ENCODE measurements at regions of chr1 and their contacts with region 1.

Region 1: DNA sequence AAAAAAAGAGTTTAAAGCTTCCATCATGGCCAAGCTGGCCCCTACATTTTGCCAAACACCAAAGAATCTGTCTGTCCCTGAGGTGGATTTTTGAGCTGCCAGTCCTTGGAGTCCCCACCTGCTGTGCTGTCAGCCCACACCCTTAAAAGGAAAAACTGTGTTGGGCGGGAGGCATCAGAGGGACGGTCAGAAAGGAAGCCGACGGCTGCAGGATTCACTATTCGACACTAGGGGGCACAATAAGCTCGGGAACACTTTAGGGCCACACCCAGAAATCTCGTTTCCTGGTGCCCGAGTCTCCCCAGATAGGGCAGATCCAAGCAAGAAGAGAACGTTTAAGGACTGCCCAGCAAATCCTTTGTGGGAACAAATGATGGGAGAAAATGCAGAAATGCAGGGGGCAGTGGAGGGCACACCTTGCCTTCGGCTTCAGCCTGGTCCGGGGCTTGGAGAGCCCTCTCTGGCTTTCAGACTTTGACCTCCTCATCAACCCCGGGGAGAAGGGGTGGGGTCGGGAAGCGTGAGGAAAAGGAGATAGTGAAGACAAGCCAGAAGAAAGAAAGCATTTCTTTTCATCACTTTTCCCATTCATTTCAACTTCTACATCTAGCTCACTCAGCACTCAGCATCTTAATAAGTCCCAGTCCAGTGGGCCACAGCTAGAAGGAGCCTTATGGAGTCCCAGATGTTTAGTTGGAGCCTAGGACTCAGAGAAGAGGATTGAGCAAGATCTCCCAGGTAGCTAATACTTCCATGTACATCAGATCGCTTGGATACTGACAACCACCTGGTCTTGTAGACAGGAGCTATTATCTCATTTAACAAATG is 5.0 kb upstream of the CTTNBP2NL start:
- DNase-seq: peak; percentile 86
- H3K4me3 Mint-ChIP-seq: peak overlapping the region; percentile 62
- H3K27ac Mint-ChIP-seq: peak overlapping the region; percentile 6
- H3K4me1 Mint-ChIP-seq: peaks cover 42% of the 10 kb centered on the region
- H3K27me3 Mint-ChIP-seq: peaks cover 7% of the 10 kb centered on the region

Region 2: DNA sequence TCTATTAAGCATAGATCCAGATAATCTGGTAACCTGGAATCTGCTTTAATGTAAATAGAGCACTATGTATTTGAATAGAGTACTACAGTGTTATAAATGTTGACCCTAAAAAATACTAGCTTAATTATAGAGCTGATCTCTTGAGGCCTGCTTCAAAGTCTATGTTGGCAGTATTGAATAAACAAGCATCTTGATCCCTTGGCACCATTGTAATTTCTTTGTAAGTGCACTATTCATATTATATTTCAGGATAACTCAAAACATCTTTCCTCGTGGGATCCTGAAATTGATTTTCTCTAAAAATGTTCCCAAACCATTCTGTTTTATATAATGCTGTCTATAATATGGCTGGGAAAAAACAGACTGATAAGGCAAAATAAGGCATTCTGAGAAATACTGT is 15.8 kb after region 1 on chr1:
- CTCF ChIA-PET with region 1: interaction called, 18 read pairs
- POLR2A ChIA-PET with region 1: no interaction called
- DNase-seq: no peak
- H3K4me3 Mint-ChIP-seq: no peak overlapping the region
- H3K27ac Mint-ChIP-seq: no peak overlapping the region
- H3K4me1 Mint-ChIP-seq: peaks cover 3% of the 10 kb centered on the region
- H3K27me3 Mint-ChIP-seq: peaks cover 2% of the 10 kb centered on the region

Region 3: DNA sequence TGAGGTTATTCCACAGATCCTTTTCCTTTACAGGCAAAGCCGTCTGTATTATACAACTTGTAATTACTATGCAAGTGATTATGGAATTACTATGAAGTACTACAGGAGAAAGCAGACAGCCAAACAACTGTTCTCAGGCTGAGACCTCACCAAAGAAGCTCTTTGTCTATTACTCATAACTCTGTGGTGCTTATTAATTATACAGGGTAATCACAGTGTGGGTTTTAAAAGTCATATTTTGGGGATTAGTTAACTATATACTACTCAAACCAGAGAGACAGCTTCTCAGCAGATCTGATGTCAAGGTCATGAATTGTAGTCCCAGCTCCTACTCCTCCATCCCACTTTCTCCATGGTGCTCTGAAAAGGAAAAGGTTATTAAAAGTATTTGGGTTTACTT is 54.6 kb after region 1 on chr1:
- CTCF ChIA-PET with region 1: interaction called, 10 read pairs
- POLR2A ChIA-PET with region 1: no interaction called
- DNase-seq: no peak
- H3K4me3 Mint-ChIP-seq: no peak overlapping the region
- H3K27ac Mint-ChIP-seq: no peak overlapping the region
- H3K4me1 Mint-ChIP-seq: no peaks in the 10 kb centered on the region
- H3K27me3 Mint-ChIP-seq: no peaks in the 10 kb centered on the region

Region 4: DNA sequence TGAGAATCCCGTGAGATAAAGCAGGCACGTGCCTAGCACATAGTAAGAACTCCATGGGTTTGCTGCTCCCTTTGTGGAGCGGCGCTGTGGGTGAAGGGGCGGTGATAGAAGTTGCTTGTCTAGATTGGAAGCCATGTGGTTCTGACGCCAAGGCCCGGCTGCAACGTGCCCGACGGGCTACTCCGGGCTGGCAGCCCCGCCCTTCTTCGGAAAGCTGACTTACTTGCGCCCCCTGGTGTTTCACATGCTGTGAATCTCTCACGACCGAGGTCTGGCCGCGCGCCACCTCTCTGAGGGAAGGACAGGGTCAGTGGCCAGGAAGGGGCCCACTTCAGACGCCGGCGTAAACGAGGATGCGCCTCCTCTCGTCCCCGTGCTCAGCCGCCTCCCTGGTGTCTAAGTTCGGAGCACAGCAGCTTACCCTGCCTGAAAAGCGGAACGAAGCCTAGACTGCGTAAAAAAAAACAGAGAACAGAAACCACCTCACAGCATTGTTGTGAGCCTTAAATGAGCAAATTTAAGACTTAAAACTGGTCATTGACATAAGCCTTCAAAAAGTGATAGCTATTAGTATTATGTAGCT is 75.2 kb after region 1 on chr1:
- CTCF ChIA-PET with region 1: interaction called, 163 read pairs
- POLR2A ChIA-PET with region 1: interaction called, 5 read pairs
- DNase-seq: peak; percentile 86
- H3K4me3 Mint-ChIP-seq: peak overlapping the region; percentile 73
- H3K27ac Mint-ChIP-seq: no peak overlapping the region
- H3K4me1 Mint-ChIP-seq: peaks cover 17% of the 10 kb centered on the region
- H3K27me3 Mint-ChIP-seq: peaks cover 32% of the 10 kb centered on the region

Region 5: DNA sequence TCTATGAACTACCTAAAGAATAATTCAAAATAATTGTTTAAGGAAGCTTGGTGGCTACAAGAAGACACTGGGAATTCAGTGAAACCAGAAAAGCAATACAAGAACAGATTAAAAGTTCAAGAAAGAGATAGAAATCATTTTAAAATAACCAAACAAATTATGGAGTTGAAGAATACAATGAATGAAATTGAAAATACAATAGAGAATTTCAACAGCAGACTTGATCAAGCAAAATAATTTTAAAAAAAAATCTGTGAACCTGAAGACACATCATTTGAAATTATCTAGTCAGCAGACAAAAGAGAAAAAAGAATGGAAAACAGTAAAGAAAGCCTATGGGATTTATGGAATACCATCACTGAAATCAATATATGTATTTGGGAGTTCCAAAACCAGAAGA is 86.6 kb after region 1 on chr1:
- CTCF ChIA-PET with region 1: no interaction called
- POLR2A ChIA-PET with region 1: no interaction called
- DNase-seq: no peak
- H3K4me3 Mint-ChIP-seq: no peak overlapping the region
- H3K27ac Mint-ChIP-seq: no peak overlapping the region
- H3K4me1 Mint-ChIP-seq: no peaks in the 10 kb centered on the region
- H3K27me3 Mint-ChIP-seq: peaks cover 24% of the 10 kb centered on the region

Region 6: GRCh38 chr1:112614460-112615065 is 223.6 kb after region 1 on chr1:
- CTCF ChIA-PET with region 1: interaction called, 36 read pairs
- POLR2A ChIA-PET with region 1: interaction called, 24 read pairs
- DNase-seq: no peak
- H3K4me3 Mint-ChIP-seq: no peak overlapping the region
- H3K27ac Mint-ChIP-seq: no peak overlapping the region
- H3K4me1 Mint-ChIP-seq: peaks cover 25% of the 10 kb centered on the region
- H3K27me3 Mint-ChIP-seq: no peaks in the 10 kb centered on the region

Region 7: GRCh38 chr1:112706908-112707663 is 316.1 kb after region 1 on chr1 and contains the start of gene RHOC:
- CTCF ChIA-PET with region 1: interaction called, 11 read pairs
- POLR2A ChIA-PET with region 1: no interaction called
- DNase-seq: peak; percentile 69
- H3K4me3 Mint-ChIP-seq: peak within 1 kb of the TSS; percentile 73
- H3K27ac Mint-ChIP-seq: peak within 1 kb of the TSS; percentile 89
- H3K4me1 Mint-ChIP-seq: peaks cover 49% of the 10 kb centered on the region
- H3K27me3 Mint-ChIP-seq: peaks cover 37% of the 10 kb centered on the region
- total RNA-seq, gene RHOC: 87.1 to 92.4 TPM

Measured in activated CD4-positive, alpha-beta memory T cell treated with anti-CD3 and anti-CD28 coated beads, Interleukin-2, amount 10 ng/mL, durations not matched to agents 7 days and 5 days (primary cell).